Right ventricle myocardium inferior (tissue), 1 donor: ENCODE measurements at regions of chr20 and their contacts with region 1.

Region 1: GRCh38 chr20:49610701-49611538 is 43.0 kb upstream of the PTGIS start:
- DNase-seq: peak; percentile 91
- ATAC-seq: peak; percentile 69

Region 2: DNA sequence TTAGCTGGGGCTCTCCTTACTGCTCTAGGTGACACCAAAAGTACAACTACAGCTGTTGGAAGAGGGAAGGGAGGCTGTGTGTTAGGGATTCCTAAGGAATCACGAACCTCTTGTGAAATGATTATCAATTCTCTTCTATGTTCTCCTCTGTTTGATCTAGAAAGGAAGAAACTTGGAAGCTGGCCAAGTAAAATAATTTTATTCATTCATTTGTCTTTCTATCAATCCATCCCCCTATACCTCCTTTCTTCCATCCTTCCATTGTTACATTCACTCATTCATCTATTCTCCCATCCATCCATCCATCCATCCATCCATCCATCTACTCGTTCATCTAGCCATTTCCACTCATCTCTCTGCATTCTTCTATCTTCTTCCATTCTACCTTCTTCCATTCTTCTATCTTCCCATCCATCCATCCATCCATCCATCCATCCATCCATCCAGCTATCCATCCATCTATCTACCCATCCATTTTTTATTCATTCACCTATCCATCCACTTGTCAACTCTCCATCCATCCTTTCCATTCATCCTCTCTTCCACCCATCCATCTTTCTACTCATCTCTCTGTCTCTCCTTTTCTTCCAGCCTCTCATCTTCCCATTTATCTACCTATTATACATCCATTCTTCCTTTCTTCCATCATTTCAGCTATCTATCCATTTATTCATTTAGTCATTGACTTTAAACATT is 280.2 kb before region 1 on chr20:
- intact Hi-C with region 1: loop called (anchors 5 kb)
- DNase-seq: no peak
- ATAC-seq: no peak

Region 3: DNA sequence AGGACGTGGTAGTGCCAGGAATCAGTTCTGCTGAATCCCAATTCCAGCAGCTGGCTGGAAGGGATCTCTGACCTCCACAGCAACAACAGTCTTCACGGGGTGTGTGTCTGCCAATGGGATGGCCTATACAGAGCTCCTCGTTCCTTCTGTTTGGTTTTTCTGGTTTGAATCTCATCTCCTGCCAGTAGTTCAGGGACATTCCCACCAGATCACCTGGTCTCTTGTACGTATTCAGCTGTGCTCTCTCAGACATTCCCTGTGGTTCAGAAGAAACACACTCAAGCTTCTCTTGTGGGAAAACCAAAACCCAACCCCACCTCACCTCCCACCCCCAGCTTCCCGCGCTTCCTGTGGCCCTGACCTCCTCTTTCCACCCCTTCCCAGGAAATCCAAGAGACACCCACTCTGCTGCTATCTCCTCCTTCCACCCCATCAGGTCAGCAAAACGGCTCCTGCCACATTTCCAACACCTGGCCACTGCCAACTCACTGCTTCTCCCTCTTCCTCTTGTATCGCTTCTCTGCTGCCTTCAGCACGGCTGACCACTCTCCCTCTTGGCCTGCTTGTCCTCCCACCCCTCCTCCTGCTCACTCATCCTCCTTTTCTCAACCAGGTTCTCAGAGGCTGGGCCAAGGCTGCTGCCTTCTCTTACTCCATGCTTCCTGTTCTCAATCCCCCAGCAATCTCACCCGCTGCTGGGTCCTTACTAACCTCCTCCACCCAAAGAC is 20.3 kb after region 1 on chr20:
- intact Hi-C with region 1: loop called (anchors 1 kb)
- DNase-seq: no peak
- ATAC-seq: peak; percentile 30

Region 4: DNA sequence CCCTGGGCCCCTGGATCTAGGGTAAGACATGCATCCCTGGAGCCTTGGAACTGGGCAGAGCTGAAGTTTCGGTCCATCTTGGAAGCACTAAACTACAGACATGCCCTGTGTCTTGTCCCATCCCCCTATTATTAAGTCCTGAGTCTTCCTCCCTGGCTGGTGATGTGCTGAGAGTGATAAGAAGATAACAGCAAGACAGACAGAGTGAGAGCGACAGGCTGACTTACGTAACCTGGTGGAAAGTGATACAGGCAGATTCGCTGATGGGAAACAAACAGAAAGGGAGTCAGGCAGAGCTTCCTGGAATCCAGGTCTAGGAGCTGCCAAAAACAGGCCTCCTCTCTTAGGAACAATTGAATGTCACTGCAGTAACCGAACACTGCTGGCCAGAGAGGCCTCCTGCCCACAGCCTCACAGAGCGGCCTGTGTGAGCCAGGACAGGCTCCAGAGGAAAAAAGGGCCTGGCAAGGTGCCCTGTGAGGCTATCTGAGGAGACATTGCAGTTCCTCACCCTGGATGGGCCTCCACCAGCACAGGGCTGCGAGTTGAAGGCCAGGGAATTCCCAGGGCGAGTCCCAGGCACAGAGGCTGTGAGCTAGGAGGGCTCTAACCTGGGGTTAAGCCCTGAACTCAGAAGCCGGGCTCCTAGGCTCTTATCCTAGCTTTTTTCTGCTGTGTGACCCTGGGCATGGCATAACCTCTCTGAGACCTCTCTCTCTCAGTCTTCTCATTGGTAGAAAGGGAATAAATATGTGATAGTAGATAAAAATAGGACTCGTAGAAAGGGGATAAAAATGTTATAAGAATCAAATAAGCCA is 137.0 kb after region 1 on chr20:
- intact Hi-C with region 1: loop called (anchors 2 kb)
- DNase-seq: peak; percentile 93
- ATAC-seq: peak; percentile 96

Region 5: GRCh38 chr20:49812463-49813304 is 201.8 kb after region 1 on chr20 and contains the start of gene SLC9A8:
- intact Hi-C with region 1: loop called (anchors 1 kb)
- DNase-seq: peak; percentile 92
- ATAC-seq: peak; percentile 97
- total RNA-seq, gene SLC9A8: 4.7 TPM

Region 6: DNA sequence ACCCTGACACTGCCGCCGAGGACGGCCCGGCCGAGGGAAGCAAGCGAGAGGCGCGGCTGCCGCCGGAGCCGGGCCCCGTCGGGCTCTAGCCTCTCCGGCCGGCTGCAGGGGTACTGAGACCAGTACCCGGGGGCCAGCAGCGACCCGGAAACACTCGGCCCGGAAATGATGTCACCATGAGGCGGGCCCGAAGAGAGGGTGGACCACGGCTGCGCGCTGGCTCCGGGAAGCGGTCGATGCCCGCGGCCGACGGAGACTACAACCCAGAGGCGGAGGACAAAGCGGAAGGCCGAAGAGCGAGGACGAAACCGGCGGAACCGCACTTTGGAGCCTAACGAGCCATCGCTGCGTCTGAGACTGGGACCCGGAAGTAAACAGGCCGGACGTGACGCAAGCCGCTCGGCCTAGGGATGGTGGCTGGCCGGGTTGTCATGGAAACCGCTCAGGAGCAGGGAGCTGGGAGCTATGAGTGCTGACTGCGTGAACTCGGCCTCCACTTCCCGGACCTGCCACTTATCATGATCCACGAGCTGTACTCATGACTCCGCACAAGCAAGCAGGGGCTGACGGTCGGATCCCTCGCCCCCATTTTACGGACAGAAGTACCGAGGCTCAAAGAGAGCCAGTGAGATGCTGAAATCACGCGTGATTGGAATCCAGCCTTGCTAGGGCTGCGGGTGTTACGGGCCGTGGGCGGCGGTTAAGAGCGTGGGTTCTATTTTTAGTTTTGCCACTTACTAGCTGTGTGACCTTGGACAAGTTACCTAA is 304.6 kb after region 1 on chr20 and contains the start of gene SPATA2:
- intact Hi-C with region 1: loop called (anchors 5 kb)
- DNase-seq: peak; percentile 99
- ATAC-seq: peak; percentile 94
- total RNA-seq, gene SPATA2: 8.0 TPM